Astrocyte of the cerebellum (primary cell): ENCODE measurements at regions of chr16 and their contacts with region 1.

Region 1: DNA sequence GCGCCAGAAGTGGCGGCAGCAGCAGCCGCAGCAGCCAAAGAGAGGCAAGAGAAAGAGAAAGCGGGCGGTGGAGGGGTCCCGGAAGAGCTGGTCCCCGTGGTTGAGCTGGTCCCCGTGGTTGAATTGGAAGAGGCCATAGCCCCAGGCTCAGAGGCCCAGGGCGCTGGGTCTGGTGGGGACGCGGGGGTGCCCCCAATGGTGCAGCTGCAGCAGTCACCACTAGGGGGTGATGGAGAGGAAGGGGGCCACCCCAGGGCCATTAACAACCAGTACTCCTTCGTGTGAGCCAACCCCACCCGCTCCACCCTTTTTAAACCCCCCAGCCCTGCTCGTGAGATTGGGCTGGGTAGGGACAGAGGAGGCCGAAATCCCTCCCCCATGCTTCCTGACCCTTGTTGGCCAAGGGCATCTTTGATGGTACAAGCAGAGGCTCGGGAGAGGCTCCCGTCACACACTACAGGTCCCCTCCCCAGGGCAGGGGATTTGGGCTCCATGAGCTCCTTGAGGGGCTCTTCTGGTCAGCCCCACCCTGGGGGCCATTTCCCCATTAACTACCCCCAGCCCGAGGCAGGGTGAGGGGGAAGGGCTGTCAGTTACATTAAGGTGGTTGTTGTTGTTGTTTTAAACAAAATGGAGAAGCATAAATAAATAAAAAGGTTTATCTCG is 4.6 kb upstream of the ATP2A1 start:
- DNase-seq: no peak
- H3K4me3 ChIP-seq: no peak overlapping the region
- CTCF ChIP-seq: peak; percentile 59

Region 2: GRCh38 chr16:28166394-28167208 is 707.1 kb before region 1 on chr16:
- in situ Hi-C with region 1: no loop called
- DNase-seq: no peak
- H3K4me3 ChIP-seq: no peak overlapping the region
- CTCF ChIP-seq: no peak

Region 3: GRCh38 chr16:28964072-28964471 is 90.4 kb after region 1 on chr16:
- in situ Hi-C with region 1: loop called (anchors 5 kb)
- DNase-seq: no peak
- H3K4me3 ChIP-seq: no peak overlapping the region
- CTCF ChIP-seq: no peak